Gastrocnemius medialis (tissue), 4 donors: ENCODE measurements at regions of chr10 and their contacts with region 1.

Region 1: GRCh38 chr10:3467052-3467951 is 294.7 kb upstream of the PITRM1 start:
- DNase-seq: peak; percentile 83 to 86
- ATAC-seq: peak; percentile 67 to 77
- H3K4me3 ChIP-seq: peak overlapping the region; percentile 34 to 41 (median 38)
- H3K27ac ChIP-seq: peak overlapping the region; percentile 86 to 96 (median 92)
- H3K4me1 ChIP-seq: peaks cover 25 to 43% of the 10 kb centered on the region in 2 donors
- H3K27me3 ChIP-seq: no peaks in the 10 kb centered on the region
- CTCF ChIP-seq: peak; percentile 26 to 78 (median 68)
- POLR2A ChIP-seq: peak; percentile 53 to 62

Region 2: GRCh38 chr10:3020311-3020710 is 447.0 kb before region 1 on chr10:
- in situ Hi-C with region 1: no loop called
- intact Hi-C with region 1: no loop called
- DNase-seq: no peak
- ATAC-seq: no peak
- H3K4me3 ChIP-seq: no peak overlapping the region
- H3K27ac ChIP-seq: no peak overlapping the region
- H3K4me1 ChIP-seq: no peaks in the 10 kb centered on the region
- H3K27me3 ChIP-seq: peaks cover 0 to 3% (median 0%) of the 10 kb centered on the region in 3 donors
- CTCF ChIP-seq: no peak
- POLR2A ChIP-seq: no peak

Region 3: DNA sequence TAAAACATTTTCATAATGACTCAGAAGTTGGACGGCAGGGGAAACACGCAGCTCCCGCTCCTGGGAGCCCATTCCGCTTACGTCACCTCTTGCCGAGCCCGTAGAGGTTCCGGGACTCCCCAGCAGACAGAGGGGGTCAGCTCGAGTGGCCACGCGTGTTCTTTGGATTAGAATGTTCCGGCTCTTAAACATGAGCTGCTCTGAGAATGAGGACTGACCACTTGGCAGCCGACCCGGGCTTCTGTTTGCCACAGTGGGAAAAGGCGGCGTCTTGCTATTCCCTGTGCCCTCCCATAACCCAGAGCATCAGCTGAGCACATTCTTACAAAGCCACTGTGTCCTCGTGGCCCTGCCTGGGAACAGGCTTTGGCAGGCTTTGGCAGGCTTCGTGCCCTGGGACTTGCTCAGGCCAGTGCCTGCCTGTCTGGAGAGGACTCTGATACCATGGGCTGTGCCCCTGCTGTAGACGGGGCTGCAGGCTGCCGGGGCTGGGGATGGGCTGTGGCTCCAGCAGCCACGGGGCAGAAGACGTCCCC is 359.8 kb before region 1 on chr10:
- in situ Hi-C with region 1: no loop called
- intact Hi-C with region 1: loop called (anchors 5 kb)
- DNase-seq: peak; percentile 92 to 97
- ATAC-seq: peak; percentile 76 to 90
- H3K4me3 ChIP-seq: peak overlapping the region in 3 of 4 donors; percentile 23 to 26 (median 26)
- H3K27ac ChIP-seq: peak overlapping the region; percentile 85 to 92 (median 86)
- H3K4me1 ChIP-seq: peaks cover 58 to 75% of the 10 kb centered on the region in 2 donors
- H3K27me3 ChIP-seq: no peaks in the 10 kb centered on the region
- CTCF ChIP-seq: peak in 1 of 5 experiments; percentile 10
- POLR2A ChIP-seq: peak; percentile 43 to 52

Region 4: GRCh38 chr10:3570855-3571266 is 103.6 kb after region 1 on chr10:
- in situ Hi-C with region 1: no loop called
- intact Hi-C with region 1: loop called (anchors 2 kb)
- DNase-seq: peak; percentile 15 to 65
- ATAC-seq: peak in 1 of 2 donors; percentile 29
- H3K4me3 ChIP-seq: no peak overlapping the region
- H3K27ac ChIP-seq: peak overlapping the region; percentile 16 to 63 (median 36)
- H3K4me1 ChIP-seq: peaks cover 42 to 63% of the 10 kb centered on the region in 2 donors
- H3K27me3 ChIP-seq: no peaks in the 10 kb centered on the region
- CTCF ChIP-seq: no peak
- POLR2A ChIP-seq: no peak

Region 5: GRCh38 chr10:3757638-3758490 is 290.6 kb after region 1 on chr10:
- in situ Hi-C with region 1: no loop called
- intact Hi-C with region 1: no loop called
- DNase-seq: no peak
- ATAC-seq: no peak
- H3K4me3 ChIP-seq: no peak overlapping the region
- H3K27ac ChIP-seq: no peak overlapping the region
- H3K4me1 ChIP-seq: peaks cover 0 to 5% of the 10 kb centered on the region in 2 donors
- H3K27me3 ChIP-seq: no peaks in the 10 kb centered on the region
- CTCF ChIP-seq: no peak
- POLR2A ChIP-seq: no peak

Region 6: GRCh38 chr10:3776796-3777571 is 309.7 kb after region 1 on chr10:
- in situ Hi-C with region 1: loop called in 2 of 4 experiments (anchors 10 to 25 kb)
- intact Hi-C with region 1: loop called (anchors 2 kb)
- DNase-seq: peak; percentile 39 to 53
- ATAC-seq: peak; percentile 24 to 29
- H3K4me3 ChIP-seq: peak overlapping the region in 2 of 4 donors; percentile 83 to 89
- H3K27ac ChIP-seq: peak overlapping the region; percentile 97 to 100 (median 98)
- H3K4me1 ChIP-seq: peaks cover 69 to 75% of the 10 kb centered on the region in 2 donors
- H3K27me3 ChIP-seq: no peaks in the 10 kb centered on the region
- CTCF ChIP-seq: no peak
- POLR2A ChIP-seq: peak; percentile 8 to 48

Region 7: GRCh38 chr10:4241724-4242345 is 774.5 kb after region 1 on chr10:
- in situ Hi-C with region 1: no loop called
- intact Hi-C with region 1: loop called (anchors 5 kb)
- DNase-seq: no peak
- ATAC-seq: peak; percentile 35 to 46
- H3K4me3 ChIP-seq: peak overlapping the region; percentile 10 to 50 (median 41)
- H3K27ac ChIP-seq: peak overlapping the region; percentile 69 to 83 (median 76)
- H3K4me1 ChIP-seq: peaks cover 11 to 33% of the 10 kb centered on the region in 2 donors
- H3K27me3 ChIP-seq: no peaks in the 10 kb centered on the region
- CTCF ChIP-seq: no peak
- POLR2A ChIP-seq: peak in 1 of 2 donors; percentile 8